ENCODE measurements at regions of chr17 and their contacts with region 1.

Region 1: GRCh38 chr17:5019475-5019956 is 15.7 kb downstream of the SLC52A1 start:
- DNase-seq: peak in 8 of 10 donors; percentile 34 to 79 (median 48)
- ATAC-seq: peak; percentile 87 to 96
- H3K4me3 Mint-ChIP-seq: no peak overlapping the region
- H3K27ac Mint-ChIP-seq: peak overlapping the region in 8 of 10 donors; percentile 15 to 90 (median 74)
- H3K4me1 Mint-ChIP-seq: peaks cover 3 to 20% (median 12%) of the 10 kb centered on the region in 4 donors
- H3K27me3 Mint-ChIP-seq: no peaks in the 10 kb centered on the region

Region 2: GRCh38 chr17:4881761-4882555 is 137.6 kb before region 1 on chr17:
- POLR2A ChIA-PET with region 1: no interaction called
- DNase-seq: peak; percentile 47 to 81 (median 65)
- ATAC-seq: peak; percentile 94 to 99
- H3K4me3 Mint-ChIP-seq: no peak overlapping the region
- H3K27ac Mint-ChIP-seq: peak overlapping the region in 2 of 10 donors; percentile 15 to 56
- H3K4me1 Mint-ChIP-seq: peaks cover 0 to 2% (median 1%) of the 10 kb centered on the region in 4 donors
- H3K27me3 Mint-ChIP-seq: no peaks in the 10 kb centered on the region

Region 3: DNA sequence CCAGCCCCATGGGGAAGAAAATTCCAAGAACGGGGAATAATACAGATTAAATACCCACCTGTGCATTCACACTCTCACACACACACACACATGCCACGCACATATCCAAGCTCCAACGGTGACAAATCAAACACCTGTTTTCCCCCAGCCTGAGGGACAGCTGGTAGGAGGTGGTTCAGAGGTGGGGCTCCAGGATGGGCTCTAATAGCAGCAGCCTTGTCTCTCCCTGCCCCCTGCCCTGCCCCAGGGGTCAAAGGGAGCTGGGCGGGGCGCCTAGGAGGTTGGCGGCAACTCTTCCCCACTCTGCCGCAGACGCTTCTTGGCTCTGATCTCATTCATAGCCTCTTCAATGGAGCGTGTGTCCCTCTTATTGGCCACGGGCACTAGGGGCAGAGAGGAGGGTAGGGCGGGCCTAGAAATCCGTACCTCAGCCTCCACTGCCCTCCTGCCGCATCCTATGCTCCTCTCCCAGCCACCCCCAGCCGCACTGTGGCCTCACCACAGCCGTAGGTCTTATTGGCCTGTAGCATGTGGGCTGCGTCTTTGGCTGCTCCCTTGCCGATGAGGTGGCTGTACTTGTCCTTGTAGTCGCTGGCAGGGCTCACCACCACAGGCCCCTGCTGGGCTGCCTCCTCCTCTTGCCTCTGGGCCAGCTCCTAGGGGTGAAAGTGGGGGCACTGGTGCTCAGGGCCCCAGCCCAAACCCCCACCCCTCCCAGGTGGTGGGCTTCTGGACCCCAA is 60.1 kb before region 1 on chr17:
- POLR2A ChIA-PET with region 1: no interaction called
- DNase-seq: no peak
- ATAC-seq: no peak
- H3K4me3 Mint-ChIP-seq: no peak overlapping the region
- H3K27ac Mint-ChIP-seq: peak overlapping the region in 1 of 10 donors; percentile 25
- H3K4me1 Mint-ChIP-seq: peaks cover 8 to 14% (median 11%) of the 10 kb centered on the region in 4 donors
- H3K27me3 Mint-ChIP-seq: no peaks in the 10 kb centered on the region

Region 4: GRCh38 chr17:5031365-5032082 is 12.0 kb after region 1 on chr17:
- POLR2A ChIA-PET with region 1: interaction called, 11 read pairs
- DNase-seq: peak; percentile 61 to 91 (median 80)
- ATAC-seq: peak; percentile 84 to 87
- H3K4me3 Mint-ChIP-seq: peak overlapping the region; percentile 76 to 88 (median 85)
- H3K27ac Mint-ChIP-seq: peak overlapping the region; percentile 76 to 91 (median 85)
- H3K4me1 Mint-ChIP-seq: peaks cover 5 to 21% (median 17%) of the 10 kb centered on the region in 4 donors
- H3K27me3 Mint-ChIP-seq: peaks cover 0 to 18% (median 4%) of the 10 kb centered on the region in 5 donors

Region 5: DNA sequence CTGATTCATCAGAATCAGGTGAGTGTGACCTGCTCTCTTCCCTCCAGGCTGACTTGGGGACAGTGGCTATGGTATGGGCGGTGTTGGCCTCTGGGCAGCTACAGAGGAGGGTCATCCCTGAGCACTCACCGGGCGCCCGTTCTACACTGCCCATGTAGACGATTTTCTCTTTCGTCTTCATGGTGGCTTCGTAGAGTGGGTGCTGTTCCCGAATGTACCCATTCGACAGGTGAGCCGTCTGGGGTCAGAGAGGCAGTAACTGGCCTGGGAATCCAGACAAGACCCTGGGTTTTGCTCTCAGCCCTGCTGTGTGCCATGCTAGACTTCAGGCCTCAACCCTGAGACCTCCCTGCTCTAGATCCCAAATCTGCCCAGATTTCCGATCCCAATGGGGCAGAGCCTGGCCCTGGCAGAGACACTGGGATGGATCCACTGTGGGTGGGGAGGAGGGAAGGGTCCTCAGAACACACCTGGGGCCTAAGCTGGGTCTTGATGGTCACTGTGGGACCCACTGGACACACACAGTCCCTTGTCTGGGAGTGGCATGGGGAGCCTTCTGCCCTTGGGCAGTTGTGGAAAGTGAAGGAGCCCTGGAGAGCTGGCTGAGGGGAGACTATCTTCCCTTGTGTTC is 109.5 kb after region 1 on chr17:
- POLR2A ChIA-PET with region 1: no interaction called
- DNase-seq: peak in 1 of 10 donors; percentile 45
- ATAC-seq: no peak
- H3K4me3 Mint-ChIP-seq: no peak overlapping the region
- H3K27ac Mint-ChIP-seq: no peak overlapping the region
- H3K4me1 Mint-ChIP-seq: no peaks in the 10 kb centered on the region
- H3K27me3 Mint-ChIP-seq: peaks cover 5 to 34% (median 17%) of the 10 kb centered on the region in 5 donors

Region 6: DNA sequence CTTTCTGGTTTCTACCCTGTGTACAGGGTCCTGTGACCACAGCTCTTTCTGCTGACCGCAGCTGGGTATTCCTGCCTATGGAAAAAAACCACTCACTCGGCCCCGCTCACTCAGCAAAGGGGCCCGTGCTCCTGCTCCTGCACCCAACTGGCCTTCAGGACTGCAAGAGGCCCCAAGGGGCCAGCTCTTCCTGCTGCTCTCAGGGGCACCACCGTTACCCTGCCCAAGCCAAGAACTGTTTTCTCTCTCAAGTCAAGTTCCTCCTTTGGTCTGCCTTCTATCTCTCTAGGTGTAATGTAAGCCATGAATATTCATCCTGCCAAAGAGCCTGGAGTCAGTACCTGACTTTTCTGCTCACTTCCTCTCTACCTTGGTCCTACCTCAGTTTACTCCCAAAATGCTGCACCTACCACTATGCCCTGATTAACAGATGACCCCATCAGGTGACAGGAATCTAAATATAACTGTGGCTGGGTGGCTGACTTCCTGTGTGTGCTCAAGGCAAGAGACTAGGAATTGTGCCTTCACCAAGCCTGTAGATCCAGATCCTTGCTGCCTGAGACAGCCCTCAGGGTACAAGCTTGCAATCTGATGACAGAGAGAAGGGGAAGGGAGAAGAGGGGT is 235.5 kb after region 1 on chr17:
- POLR2A ChIA-PET with region 1: no interaction called
- DNase-seq: no peak
- ATAC-seq: no peak
- H3K4me3 Mint-ChIP-seq: peak overlapping the region in 4 of 10 donors; percentile 19 to 61 (median 45)
- H3K27ac Mint-ChIP-seq: peak overlapping the region in 6 of 10 donors; percentile 5 to 89 (median 34)
- H3K4me1 Mint-ChIP-seq: peaks cover 5 to 35% (median 18%) of the 10 kb centered on the region in 4 donors
- H3K27me3 Mint-ChIP-seq: no peaks in the 10 kb centered on the region

Measured in naive thymus-derived CD8-positive, alpha-beta T cell (primary cell).